ENCODE measurements at regions of chr6 and their contacts with region 1.

Region 1: DNA sequence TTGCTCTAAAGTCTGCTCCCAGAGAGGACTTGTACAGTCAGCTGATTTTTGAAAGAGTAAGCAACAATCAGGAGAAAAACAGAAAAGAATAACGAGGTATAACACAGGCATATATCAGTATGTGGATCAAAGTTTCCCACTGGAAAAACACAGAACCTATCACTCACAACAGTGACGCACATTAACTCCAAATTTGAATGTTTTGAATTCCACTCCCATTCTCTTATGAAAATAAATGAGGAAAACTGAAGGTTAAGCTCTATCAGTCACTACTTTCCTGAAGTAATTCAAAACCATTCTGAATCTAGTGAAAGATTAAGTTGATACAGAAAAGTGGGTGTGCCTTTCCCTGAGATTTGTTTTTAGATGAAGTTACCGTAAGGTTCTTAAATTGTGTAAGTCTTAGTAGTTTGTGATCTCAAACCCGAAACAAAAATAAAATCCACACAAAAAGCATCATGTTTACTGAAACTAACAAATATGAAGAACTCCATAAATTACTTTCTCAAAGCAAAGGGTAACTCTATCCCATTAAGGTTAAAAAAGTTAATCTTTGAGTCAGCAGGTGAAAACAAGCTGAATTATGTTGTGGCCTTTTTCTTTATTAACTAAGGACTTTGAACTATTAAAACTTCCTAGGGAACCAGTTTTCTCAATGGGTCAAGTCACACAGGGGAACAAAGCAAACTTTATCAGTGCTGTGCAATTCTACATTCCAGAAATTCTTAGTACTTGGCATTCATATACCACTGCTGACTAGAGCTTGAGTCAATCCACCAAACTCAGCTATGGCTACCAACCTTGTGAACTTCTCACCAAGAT is 115.7 kb downstream of the OGFRL1 start:
- DNase-seq: peak; percentile 94
- H3K4me3 ChIP-seq: peak overlapping the region; percentile 22 to 83 (median 41)
- H3K27ac ChIP-seq: peak overlapping the region; percentile 95
- H3K4me1 ChIP-seq: peaks cover 89% of the 10 kb centered on the region
- H3K27me3 ChIP-seq: no peaks in the 10 kb centered on the region
- CTCF ChIP-seq: no peak
- POLR2A ChIP-seq: no peak

Region 2: DNA sequence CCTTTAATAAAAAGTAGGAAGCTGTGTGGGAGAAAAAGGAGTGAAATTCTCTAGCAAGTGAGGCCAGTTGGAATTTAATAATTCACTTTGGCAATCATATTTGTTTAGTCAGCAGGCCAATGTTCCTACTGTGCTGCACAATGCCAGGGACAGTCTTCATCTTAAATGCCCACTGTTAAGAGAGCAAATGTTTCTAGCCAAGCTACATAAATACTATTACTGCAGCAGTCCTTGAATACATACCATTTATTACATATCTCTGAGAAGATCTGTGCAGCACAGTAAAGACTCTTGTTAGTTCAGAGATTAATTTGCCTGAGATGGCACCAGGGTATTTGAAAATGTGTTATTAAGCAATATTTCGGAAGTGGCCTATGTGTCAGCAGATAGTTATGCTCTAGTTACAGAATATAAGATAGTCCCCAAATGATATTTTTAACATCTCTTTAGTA is 10.3 kb before region 1 on chr6:
- CTCF ChIA-PET with region 1: interaction called, 16 read pairs
- POLR2A ChIA-PET with region 1: interaction called, 3 read pairs
- dilution Hi-C with region 1: no loop called
- intact Hi-C with region 1: loop called (anchors 1 kb)
- DNase-seq: no peak
- H3K4me3 ChIP-seq: peak overlapping the region in 1 of 3 experiments; percentile 12
- H3K27ac ChIP-seq: peak overlapping the region; percentile 91
- H3K4me1 ChIP-seq: peaks cover 56% of the 10 kb centered on the region
- H3K27me3 ChIP-seq: no peaks in the 10 kb centered on the region
- CTCF ChIP-seq: no peak
- POLR2A ChIP-seq: no peak

Region 3: DNA sequence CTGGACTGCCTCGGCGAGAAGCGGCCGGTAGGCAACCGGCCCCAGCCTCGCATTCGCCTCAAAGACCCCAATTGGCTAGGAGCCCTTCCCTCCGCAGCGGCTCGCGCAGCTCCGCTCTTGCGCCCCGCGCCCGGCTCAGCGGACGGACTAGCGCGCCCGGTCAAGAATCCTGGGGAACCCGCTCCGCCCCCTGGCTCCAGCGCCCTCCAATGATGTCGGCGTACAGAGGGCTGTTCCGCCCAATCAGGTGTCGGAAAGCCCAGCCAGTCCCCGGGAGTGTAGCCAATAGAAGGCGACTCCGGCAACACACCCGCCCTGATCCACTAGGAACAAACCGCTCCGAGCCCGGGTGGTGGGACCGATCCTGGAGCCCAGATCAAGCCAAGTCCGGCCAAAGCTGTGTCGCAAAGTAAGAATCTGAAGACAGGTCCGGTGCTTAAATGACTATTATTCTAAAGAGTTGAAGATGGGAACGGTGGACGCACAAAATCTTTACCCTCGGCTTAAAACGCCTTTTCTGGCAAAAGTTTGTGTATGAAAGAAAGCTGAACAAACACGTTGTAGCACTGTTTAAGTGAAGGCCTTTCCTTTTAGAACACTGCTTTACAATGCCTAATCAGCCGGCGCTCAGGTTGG is 16.5 kb after region 1 on chr6:
- CTCF ChIA-PET with region 1: interaction called, 53 read pairs
- POLR2A ChIA-PET with region 1: interaction called, 7 read pairs
- dilution Hi-C with region 1: no loop called
- intact Hi-C with region 1: loop called (anchors 1 kb)
- DNase-seq: peak; percentile 97
- H3K4me3 ChIP-seq: peak overlapping the region; percentile 65 to 97 (median 93)
- H3K27ac ChIP-seq: peak overlapping the region; percentile 71
- H3K4me1 ChIP-seq: peaks cover 18% of the 10 kb centered on the region
- H3K27me3 ChIP-seq: no peaks in the 10 kb centered on the region
- CTCF ChIP-seq: no peak
- POLR2A ChIP-seq: peak; percentile 89